PC-3 (cell line): ENCODE measurements at regions of chr6 and their contacts with region 1.

Region 1: GRCh38 chr6:5260661-5261544 is at the starts of genes FARS2 and LYRM4:
- DNase-seq: peak; percentile 85
- ATAC-seq: peak; percentile 80
- H3K4me3 ChIP-seq: peak within 1 kb of the TSS; percentile 96
- H3K27ac ChIP-seq: peak within 1 kb of the TSS; percentile 86
- H3K4me1 ChIP-seq: peaks cover 15% of the 10 kb centered on the region
- H3K27me3 ChIP-seq: no peaks in the 10 kb centered on the region
- CTCF ChIP-seq: no peak
- total RNA-seq, gene FARS2: 18.4 and 23.0 TPM in 2 replicates
- total RNA-seq, gene LYRM4: 18.6 and 27.7 TPM in 2 replicates

Region 2: GRCh38 chr6:5058254-5058653 is 202.6 kb before region 1 on chr6:
- CTCF ChIA-PET with region 1: no interaction called
- POLR2A ChIA-PET with region 1: no interaction called
- intact Hi-C with region 1: loop called (anchors 5 kb)
- DNase-seq: peak; percentile 7
- ATAC-seq: no peak; the same call in 1 of the 2 replicates
- H3K4me3 ChIP-seq: no peak overlapping the region
- H3K27ac ChIP-seq: no peak overlapping the region
- H3K4me1 ChIP-seq: no peaks in the 10 kb centered on the region
- H3K27me3 ChIP-seq: no peaks in the 10 kb centered on the region
- CTCF ChIP-seq: no peak

Region 3: GRCh38 chr6:5214570-5215052 is 46.3 kb before region 1 on chr6:
- CTCF ChIA-PET with region 1: no interaction called
- POLR2A ChIA-PET with region 1: no interaction called
- intact Hi-C with region 1: loop called (anchors 1 kb)
- DNase-seq: peak; percentile 58
- ATAC-seq: peak; percentile 69
- H3K4me3 ChIP-seq: no peak overlapping the region
- H3K27ac ChIP-seq: peak overlapping the region; percentile 16
- H3K4me1 ChIP-seq: peaks cover 17% of the 10 kb centered on the region
- H3K27me3 ChIP-seq: no peaks in the 10 kb centered on the region
- CTCF ChIP-seq: peak; percentile 87